Lower leg skin (tissue), 4 donors: ENCODE measurements at regions of chr4 and their contacts with region 1.

Region 1: DNA sequence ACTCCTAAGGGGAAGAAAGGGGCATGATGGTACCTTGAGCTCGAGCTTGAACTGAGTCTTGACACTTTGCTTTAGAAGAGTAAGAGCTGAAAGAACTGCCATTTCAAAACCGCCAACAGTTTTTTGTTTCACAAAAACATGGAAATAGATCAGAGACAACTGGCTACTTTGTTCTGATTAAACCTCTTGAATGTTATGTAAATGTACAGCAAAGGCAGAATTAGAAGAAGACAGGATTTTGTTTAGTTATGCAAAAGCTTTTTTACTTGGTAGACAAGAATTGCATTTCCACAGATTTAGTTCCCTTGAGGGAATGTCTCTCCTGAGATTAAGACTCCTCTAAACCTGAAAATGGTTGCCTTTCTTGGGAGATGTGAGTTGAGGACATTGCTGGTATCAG is 33.3 kb upstream of the STPG2 start:
- DNase-seq: no peak
- H3K4me3 ChIP-seq: no peak overlapping the region
- CTCF ChIP-seq: no peak
- POLR2A ChIP-seq: no peak

Region 2: DNA sequence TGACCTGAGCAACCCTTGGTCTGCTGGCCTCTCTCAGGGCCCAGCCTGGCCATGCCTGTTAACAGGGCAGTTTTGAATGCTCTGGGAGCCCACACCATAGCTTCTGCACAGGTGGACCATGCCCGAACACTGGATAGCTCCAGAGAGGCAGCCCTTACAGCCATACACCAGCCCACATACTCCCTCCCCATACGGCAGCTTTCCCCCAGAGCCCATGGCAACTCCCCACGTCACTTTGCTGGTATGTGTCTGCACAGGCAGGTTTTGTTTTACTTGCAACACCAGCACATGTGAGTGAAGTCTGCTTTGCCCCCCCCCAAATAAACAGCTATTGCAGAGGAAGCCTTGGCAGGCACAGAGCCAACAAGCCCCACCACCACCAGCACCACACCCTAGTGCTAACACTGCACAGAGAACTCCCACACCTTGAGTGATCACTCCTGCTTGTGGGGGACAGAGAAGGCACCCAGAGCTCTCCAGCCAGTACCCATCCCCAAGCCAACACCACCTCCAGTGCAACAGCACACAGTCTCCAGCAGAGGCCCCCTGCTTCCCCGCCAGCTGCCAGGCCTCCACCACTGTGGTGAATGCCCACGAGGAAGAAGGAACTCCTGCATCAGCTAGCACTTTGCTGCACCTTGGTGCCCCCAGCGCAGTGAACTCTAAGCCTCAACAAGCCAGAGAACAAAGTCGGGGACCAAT is 120.6 kb before region 1 on chr4:
- intact Hi-C with region 1: no loop called
- DNase-seq: no peak
- H3K4me3 ChIP-seq: no peak overlapping the region
- CTCF ChIP-seq: no peak
- POLR2A ChIP-seq: no peak

Region 3: DNA sequence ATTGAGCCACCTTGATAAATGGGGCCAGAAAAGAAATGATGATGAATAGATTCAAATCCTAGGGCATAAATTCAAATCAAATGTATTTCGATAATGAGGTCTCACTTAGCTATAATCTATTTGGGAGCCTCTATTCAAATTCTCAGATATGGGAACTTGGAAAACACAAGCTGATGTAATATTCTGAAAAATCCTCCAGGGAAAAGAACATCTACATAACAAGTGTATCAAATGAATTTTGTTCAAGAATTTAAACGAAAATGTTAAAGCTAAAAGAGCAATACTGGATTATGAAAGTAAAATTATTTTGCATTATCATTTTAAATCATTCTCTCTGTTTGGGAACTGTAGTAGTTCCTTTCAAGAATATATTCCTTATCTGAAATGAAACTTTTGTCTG is 45.8 kb after region 1 on chr4:
- intact Hi-C with region 1: loop called (anchors 2 kb)
- DNase-seq: no peak
- H3K4me3 ChIP-seq: no peak overlapping the region
- CTCF ChIP-seq: no peak
- POLR2A ChIP-seq: no peak